Left colon (tissue), 2 donors: ENCODE measurements at regions of chr2 and their contacts with region 1.

Region 1: DNA sequence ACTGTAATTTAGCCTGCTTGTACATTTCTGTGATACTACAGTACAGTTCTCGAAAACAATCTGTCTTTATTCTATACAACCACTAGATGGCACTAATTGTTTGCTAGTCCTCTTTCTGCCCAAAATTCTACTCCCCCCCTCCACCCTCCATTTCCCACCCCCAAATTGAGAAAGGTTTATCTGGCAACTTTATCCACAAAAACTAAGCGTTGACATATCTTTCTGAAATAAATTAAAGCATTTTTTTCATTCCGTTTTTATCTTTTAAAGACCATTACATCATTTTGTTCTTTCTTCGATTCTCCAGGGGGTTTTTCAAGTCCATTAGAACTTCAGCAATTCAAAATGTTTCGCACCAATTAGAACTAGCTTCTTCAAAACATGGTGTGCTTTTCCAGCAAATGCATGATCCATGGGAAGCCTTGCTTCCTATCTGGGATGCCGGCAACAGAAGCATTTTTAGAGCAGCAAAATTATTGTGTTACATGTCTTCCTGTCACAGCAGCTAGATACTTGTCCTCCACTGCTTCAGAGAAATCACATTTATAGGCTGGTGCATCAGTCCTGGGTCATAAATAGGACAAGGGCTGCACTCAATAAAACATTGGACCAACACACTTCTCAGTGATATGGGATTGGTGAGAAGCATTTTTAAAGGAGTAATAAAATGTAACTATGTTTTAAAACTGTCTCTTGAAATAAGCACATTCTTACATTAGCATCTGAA is 241.3 kb downstream of the PAX3 start:
- DNase-seq: no peak
- ATAC-seq: no peak

Region 2: GRCh38 chr2:222613715-222614331 is 556.3 kb after region 1 on chr2:
- intact Hi-C with region 1: loop called in 1 of 2 experiments (anchors 10 kb)
- DNase-seq: no peak
- ATAC-seq: peak; percentile 77